Dorsolateral prefrontal cortex (tissue), 120 donors: ENCODE measurements at regions of chr9 and their contacts with region 1.

Region 1: GRCh38 chr9:89038382-89039103 is 47.3 kb downstream of the S1PR3 start:
- DNase-seq: peak in 7 of 10 donors; percentile 6 to 80 (median 62)
- H3K4me3 ChIP-seq: peak overlapping the region in 9 of 59 donors; percentile 1 to 42 (median 18)
- H3K27ac ChIP-seq: peak overlapping the region in 52 of 59 donors; percentile 2 to 86 (median 64)
- H3K27me3 ChIP-seq: no peaks in the 10 kb centered on the region
- CTCF ChIP-seq: peak in 2 of 56 donors; percentile 12 to 27

Region 2: DNA sequence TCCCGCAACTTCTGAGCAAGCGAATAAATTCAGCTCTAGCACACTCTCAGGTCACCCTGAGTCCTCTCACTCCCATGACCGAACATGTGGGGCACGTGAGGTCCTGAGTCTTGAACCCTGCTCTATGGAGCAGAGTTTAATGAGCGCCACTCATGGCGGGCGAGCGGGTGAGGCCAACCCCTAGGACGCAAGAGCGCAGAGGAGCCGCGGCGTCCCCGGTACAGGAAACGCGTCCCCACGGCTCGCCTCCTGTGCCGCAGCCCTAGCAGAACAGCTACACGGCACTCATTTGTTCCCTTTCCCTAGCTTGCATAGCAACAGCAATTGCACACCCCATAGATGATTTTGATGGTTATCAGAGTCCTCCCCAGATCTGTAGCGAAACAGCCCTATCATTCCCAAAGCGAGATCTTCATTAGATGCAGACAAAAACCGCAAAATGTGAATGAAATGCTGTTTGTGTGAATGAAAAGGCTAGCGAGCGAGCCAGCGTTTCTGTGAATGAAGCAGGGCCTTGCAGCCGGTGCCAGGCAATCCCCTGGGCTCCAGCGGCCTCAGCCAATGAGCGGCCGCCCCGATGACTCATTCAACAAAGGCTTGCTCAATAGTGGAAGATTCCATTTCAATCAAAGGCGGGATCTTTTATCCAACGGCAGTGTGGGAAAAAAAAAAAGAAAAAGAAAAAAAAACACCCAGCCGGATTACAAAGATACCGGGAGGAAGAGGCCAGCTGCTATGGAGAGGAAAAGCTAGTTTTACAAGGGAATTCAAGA is 141.5 kb after region 1 on chr9:
- intact Hi-C with region 1: loop called in 1 of 2 experiments (anchors 5 kb)
- DNase-seq: peak; percentile 85 to 97 (median 94)
- H3K4me3 ChIP-seq: peak overlapping the region; percentile 28 to 82 (median 64)
- H3K27ac ChIP-seq: peak overlapping the region in 57 of 59 donors; percentile 8 to 91 (median 79)
- H3K27me3 ChIP-seq: peaks cover 0 to 40% (median 10%) of the 10 kb centered on the region in 45 donors
- CTCF ChIP-seq: peak in 4 of 56 donors; percentile 11 to 31 (median 14)

Region 3: GRCh38 chr9:89278997-89279739 is 240.6 kb after region 1 on chr9:
- intact Hi-C with region 1: loop called in 1 of 2 experiments (anchors 10 kb)
- DNase-seq: no peak
- H3K4me3 ChIP-seq: no peak overlapping the region
- H3K27ac ChIP-seq: no peak overlapping the region
- H3K27me3 ChIP-seq: no peaks in the 10 kb centered on the region
- CTCF ChIP-seq: peak; percentile 56 to 83 (median 72)